ENCODE measurements at regions of chr1 and their contacts with region 1.

Region 1: GRCh38 chr1:186212544-186213226 is 162.4 kb downstream of the TPR start:
- DNase-seq: peak; percentile 77
- H3K4me3 Mint-ChIP-seq: no peak overlapping the region
- H3K27ac Mint-ChIP-seq: no peak overlapping the region
- H3K4me1 Mint-ChIP-seq: no peaks in the 10 kb centered on the region
- H3K27me3 Mint-ChIP-seq: peaks cover 27% of the 10 kb centered on the region

Region 2: GRCh38 chr1:185720633-185721272 is 491.9 kb before region 1 on chr1:
- intact Hi-C with region 1: loop called (anchors 5 kb)
- DNase-seq: no peak
- H3K4me3 Mint-ChIP-seq: no peak overlapping the region
- H3K27ac Mint-ChIP-seq: no peak overlapping the region
- H3K4me1 Mint-ChIP-seq: no peaks in the 10 kb centered on the region
- H3K27me3 Mint-ChIP-seq: peaks cover 37% of the 10 kb centered on the region

Region 3: GRCh38 chr1:186155594-186155993 is 57.1 kb before region 1 on chr1:
- intact Hi-C with region 1: loop called (anchors 2 kb)
- DNase-seq: peak; percentile 64
- H3K4me3 Mint-ChIP-seq: no peak overlapping the region
- H3K27ac Mint-ChIP-seq: no peak overlapping the region
- H3K4me1 Mint-ChIP-seq: no peaks in the 10 kb centered on the region
- H3K27me3 Mint-ChIP-seq: peaks cover 7% of the 10 kb centered on the region

Region 4: GRCh38 chr1:186236921-186237320 is 24.2 kb after region 1 on chr1:
- intact Hi-C with region 1: no loop called
- DNase-seq: no peak
- H3K4me3 Mint-ChIP-seq: no peak overlapping the region
- H3K27ac Mint-ChIP-seq: no peak overlapping the region
- H3K4me1 Mint-ChIP-seq: no peaks in the 10 kb centered on the region
- H3K27me3 Mint-ChIP-seq: peaks cover 10% of the 10 kb centered on the region

Region 5: DNA sequence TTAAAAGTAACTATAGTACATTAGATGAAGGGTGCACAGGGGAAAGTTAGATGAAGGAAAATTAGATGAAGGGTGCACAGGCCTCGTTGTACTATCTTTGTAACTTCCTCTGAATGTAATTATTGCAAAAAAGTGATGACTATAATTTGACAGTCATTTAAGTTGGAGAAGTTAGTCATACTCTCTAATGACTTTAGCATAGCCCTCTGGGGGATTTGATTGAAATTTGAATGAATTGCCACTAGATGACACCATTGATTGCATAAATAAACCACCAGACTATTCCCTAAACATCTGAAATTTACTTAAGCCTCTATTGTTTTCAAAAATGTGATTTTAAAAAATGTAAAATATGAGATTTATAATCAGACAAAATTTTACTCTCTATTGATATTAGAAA is 59.8 kb after region 1 on chr1:
- intact Hi-C with region 1: no loop called
- DNase-seq: no peak
- H3K4me3 Mint-ChIP-seq: no peak overlapping the region
- H3K27ac Mint-ChIP-seq: no peak overlapping the region
- H3K4me1 Mint-ChIP-seq: peaks cover 9% of the 10 kb centered on the region
- H3K27me3 Mint-ChIP-seq: no peaks in the 10 kb centered on the region

Region 6: DNA sequence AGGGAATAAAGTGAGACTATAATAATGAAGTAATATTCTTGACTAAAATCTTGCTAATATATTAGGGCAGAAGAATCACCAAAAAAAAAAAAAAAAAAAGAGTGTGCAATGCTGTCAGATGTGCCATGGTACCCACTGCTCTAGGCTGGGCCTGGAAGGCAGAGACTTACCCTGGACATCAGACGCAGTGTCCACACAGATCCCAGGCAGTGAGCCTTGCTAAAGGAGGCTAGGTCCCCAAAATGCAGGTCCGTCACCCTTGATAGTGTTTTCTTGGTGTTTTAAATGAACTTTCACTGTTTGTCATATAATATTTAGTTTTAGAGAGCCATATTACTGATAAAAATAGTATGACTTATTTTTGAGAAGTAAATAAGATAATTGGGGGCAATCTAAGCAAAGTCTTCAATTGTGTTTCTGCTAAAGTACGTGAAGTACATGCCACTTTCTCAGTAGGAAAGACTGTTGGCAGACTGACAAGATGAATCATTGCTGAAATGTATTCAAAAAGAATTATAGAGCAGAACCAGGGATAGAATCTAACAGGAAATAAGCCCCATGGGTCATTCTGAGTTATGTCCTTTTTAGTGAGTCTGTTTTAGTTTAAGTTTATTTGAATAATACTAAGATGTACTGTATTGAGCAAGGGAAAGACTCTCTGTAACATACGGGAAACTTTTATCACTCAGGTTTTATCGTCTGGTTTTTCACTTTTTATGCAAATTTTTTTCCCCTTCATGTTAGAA is 322.9 kb after region 1 on chr1:
- intact Hi-C with region 1: no loop called
- DNase-seq: no peak
- H3K4me3 Mint-ChIP-seq: no peak overlapping the region
- H3K27ac Mint-ChIP-seq: no peak overlapping the region
- H3K4me1 Mint-ChIP-seq: no peaks in the 10 kb centered on the region
- H3K27me3 Mint-ChIP-seq: peaks cover 8% of the 10 kb centered on the region

Region 7: DNA sequence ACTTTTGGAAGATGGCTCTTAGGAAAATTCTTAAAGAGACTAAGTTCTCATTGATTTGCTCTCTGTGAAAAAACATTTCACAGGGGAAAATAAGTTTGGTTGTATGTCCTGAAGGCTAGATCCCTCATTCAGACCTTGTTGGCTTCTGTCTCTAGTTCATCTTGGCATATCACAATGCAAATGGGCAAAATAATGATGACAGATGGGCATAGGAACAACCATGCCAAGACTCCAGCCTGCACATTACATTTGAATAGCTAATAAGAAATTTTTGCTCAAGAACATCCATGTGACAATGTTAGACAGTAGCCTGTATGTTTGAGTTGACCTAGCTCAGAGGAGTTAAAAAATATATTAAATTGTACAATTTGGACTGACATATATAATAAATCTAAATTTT is 909.0 kb after region 1 on chr1:
- intact Hi-C with region 1: no loop called
- DNase-seq: no peak
- H3K4me3 Mint-ChIP-seq: no peak overlapping the region
- H3K27ac Mint-ChIP-seq: no peak overlapping the region
- H3K4me1 Mint-ChIP-seq: no peaks in the 10 kb centered on the region
- H3K27me3 Mint-ChIP-seq: no peaks in the 10 kb centered on the region

Measured in activated CD4-positive, alpha-beta T cell treated with anti-CD3 and anti-CD28 coated beads, Interleukin-2, amount 10 ng/mL, durations not matched to agents 24 days and 14 days (primary cell).